ENCODE measurements at regions of chr19 and their contacts with region 1.

Region 1: GRCh38 chr19:29844891-29845572 is 33.2 kb downstream of the CCNE1 start:
- DNase-seq: peak; percentile 94
- ATAC-seq: peak; percentile 91 to 95

Region 2: DNA sequence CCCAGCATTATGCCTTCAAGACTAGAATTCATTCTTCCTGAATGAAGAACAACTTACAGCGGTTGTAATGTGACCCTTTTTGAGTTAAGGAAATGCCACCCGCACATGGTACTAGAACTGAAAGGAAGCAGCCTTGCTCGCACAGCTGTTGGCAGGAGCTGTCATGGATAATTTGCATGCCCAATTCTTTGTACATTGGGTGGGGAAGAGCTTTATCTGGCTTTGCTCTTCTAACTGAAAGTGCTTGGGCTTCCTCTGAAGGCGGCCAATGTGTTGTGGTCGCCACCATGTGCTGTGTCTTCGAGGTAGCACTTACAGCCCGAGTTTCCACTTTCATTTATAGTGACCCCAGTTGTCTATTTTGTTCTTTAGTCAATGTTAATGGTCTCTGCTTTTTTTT is 29.8 kb before region 1 on chr19:
- intact Hi-C with region 1: loop called in 1 of 2 experiments (anchors 2 kb)
- DNase-seq: no peak
- ATAC-seq: no peak

Region 3: DNA sequence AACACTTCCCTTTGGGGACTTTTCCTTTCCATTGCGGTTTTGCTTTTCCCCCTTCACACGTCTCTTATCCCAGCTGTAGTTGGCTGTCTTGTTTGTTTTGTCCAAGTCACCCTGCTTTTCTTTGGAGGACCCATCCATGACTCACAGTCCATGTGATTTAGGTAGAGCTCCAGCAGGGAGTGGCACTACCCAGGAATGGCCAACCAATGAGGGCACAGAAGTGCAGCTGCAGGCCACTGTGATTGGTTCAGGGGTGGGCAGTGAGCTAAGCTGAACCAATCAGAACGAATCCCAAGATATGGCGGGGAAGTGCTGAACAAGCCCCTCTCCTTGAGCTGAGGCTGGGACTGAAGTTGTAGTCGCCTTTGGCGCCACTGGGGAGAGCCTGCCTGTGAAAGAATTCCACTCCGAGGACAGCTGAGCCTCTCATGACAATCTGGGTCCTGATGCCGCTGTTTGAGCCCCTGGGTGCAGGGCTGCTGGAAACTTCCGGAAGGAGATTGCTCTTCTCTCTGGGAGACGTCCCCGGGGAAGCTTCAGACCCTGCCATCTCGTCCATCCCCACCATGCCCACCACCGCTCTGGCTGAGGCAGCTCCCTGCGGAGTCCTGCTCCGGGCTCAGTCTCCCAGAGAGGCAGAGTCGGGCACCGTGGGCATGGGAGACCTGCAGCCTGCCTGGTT is 34.1 kb after region 1 on chr19:
- intact Hi-C with region 1: no loop called
- DNase-seq: no peak
- ATAC-seq: peak; percentile 38 to 52

Measured in left cardiac atrium (tissue), 4 donors.